ENCODE measurements at regions of chr15 and their contacts with region 1.

Region 1: GRCh38 chr15:34810455-34811146 is 15.3 kb upstream of the ACTC1 start:
- DNase-seq: peak; percentile 52 to 92
- H3K4me3 ChIP-seq: no peak overlapping the region
- H3K27ac ChIP-seq: peak overlapping the region; percentile 90 to 92
- H3K4me1 ChIP-seq: peaks cover 0 to 26% of the 10 kb centered on the region in 2 donors
- H3K27me3 ChIP-seq: no peaks in the 10 kb centered on the region
- CTCF ChIP-seq: no peak

Region 2: GRCh38 chr15:34721802-34722795 is 88.5 kb before region 1 on chr15:
- intact Hi-C with region 1: loop called (anchors 2 kb)
- DNase-seq: peak; percentile 61 to 94
- H3K4me3 ChIP-seq: peak overlapping the region; percentile 35 to 41
- H3K27ac ChIP-seq: peak overlapping the region; percentile 86 to 93
- H3K4me1 ChIP-seq: peaks cover 0 to 51% of the 10 kb centered on the region in 2 donors
- H3K27me3 ChIP-seq: no peaks in the 10 kb centered on the region
- CTCF ChIP-seq: peak; percentile 10 to 46 (median 25)

Region 3: GRCh38 chr15:34837246-34838016 is 26.8 kb after region 1 on chr15:
- intact Hi-C with region 1: loop called (anchors 1 kb)
- DNase-seq: peak; percentile 44 to 85
- H3K4me3 ChIP-seq: no peak overlapping the region
- H3K27ac ChIP-seq: peak overlapping the region; percentile 36 to 57
- H3K4me1 ChIP-seq: peaks cover 4 to 17% of the 10 kb centered on the region in 2 donors
- H3K27me3 ChIP-seq: no peaks in the 10 kb centered on the region
- CTCF ChIP-seq: no peak

Region 4: GRCh38 chr15:34855397-34855796 is 44.8 kb after region 1 on chr15:
- intact Hi-C with region 1: loop called (anchors 1 kb)
- DNase-seq: no peak
- H3K4me3 ChIP-seq: peak overlapping the region in 1 of 2 donors; percentile 3
- H3K27ac ChIP-seq: peak overlapping the region; percentile 64 to 71
- H3K4me1 ChIP-seq: peaks cover 9 to 30% of the 10 kb centered on the region in 2 donors
- H3K27me3 ChIP-seq: no peaks in the 10 kb centered on the region
- CTCF ChIP-seq: no peak